ENCODE measurements at regions of chr3 and their contacts with region 1.

Region 1: GRCh38 chr3:37400945-37401344 is 226.6 kb upstream of the LRRFIP2 start:
- DNase-seq: no peak
- CTCF ChIP-seq: no peak

Region 2: DNA sequence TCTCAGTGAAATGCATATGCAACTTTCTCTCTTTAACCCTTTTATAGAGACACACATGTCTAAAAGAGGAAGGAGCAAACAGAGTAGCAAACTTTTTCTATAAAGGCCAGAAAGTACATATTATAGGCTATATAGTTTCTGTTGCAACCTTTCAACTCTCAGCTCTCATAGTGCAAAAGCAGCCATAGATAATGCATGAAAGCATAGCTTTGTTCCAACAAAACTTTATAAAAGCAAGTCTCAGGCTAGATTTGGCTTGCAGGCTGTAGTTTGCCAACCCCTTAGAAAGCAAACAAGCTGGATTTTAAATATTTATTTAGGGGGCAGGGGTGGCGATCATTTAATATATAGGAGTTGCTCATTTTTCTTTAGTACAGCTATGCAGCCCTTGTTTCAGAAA is 33.5 kb before region 1 on chr3:
- CTCF ChIA-PET with region 1: no interaction called
- POLR2A ChIA-PET with region 1: interaction called, 10 read pairs
- DNase-seq: no peak
- CTCF ChIP-seq: no peak

Region 3: DNA sequence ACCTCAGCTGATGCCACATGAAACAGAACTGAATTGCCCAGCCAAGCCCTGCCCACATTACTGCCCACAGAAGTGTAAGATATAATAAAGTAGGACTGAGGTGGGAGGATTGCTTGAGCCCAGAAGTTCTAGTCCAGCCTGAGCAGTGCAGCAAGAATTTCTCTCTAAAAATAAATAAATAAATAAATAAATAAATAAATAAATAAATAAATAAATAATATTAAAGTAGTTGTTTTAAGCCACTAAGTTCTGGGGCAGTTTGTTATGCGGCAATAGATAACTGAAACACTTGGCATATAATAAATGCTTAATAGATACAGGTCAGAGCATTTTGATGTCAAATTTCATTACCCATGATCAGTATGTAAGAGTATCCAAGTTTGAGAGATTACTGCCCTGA is 22.9 kb after region 1 on chr3:
- CTCF ChIA-PET with region 1: no interaction called
- POLR2A ChIA-PET with region 1: no interaction called
- DNase-seq: no peak
- CTCF ChIP-seq: no peak

Measured in GM10248 (cell line).